GM10248 (cell line): ENCODE measurements at regions of chr3 and their contacts with region 1.

Region 1: GRCh38 chr3:39406368-39407258 is at the start of gene RPSA:
- DNase-seq: peak; percentile 96
- CTCF ChIP-seq: peak; percentile 56

Region 2: DNA sequence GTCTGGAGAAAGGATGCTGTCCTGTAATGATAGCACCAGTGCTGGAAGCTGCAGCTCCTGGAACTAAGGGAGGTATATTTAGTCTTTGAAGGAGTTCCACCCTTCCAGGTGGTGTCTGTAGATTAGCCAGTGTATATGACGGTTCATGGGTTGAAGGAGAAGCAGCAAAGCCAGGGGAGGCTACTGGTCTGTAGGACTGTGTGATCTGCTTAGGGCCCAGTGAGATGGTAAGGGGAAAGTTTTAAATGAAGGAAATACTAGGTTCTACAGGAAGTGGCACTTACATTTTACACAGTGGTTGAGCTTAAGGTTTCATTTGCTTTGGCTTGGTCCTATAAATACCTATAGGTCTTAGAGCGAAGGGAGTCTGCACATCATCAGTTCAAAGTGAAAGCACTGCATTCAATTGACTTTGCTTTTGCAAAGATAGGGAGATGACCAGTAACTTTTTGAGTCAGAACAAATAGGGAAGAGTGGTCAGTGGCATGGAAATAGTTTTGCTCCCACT is 17.8 kb before region 1 on chr3:
- CTCF ChIA-PET with region 1: interaction called, 17 read pairs
- POLR2A ChIA-PET with region 1: interaction called, 6 read pairs
- DNase-seq: peak; percentile 73
- CTCF ChIP-seq: no peak

Region 3: GRCh38 chr3:39434574-39434973 is 28.0 kb after region 1 on chr3:
- CTCF ChIA-PET with region 1: no interaction called
- POLR2A ChIA-PET with region 1: no interaction called
- DNase-seq: no peak
- CTCF ChIP-seq: no peak